Endothelial cell of umbilical vein (primary cell): ENCODE measurements at regions of chr4 and their contacts with region 1.

Region 1: GRCh38 chr4:138035781-138036258 is 206.3 kb downstream of the SLC7A11 start:
- DNase-seq: peak; percentile 80
- H3K4me3 ChIP-seq: no peak overlapping the region
- H3K27ac ChIP-seq: peak overlapping the region; percentile 76
- H3K4me1 ChIP-seq: peaks cover 35% of the 10 kb centered on the region
- H3K27me3 ChIP-seq: no peaks in the 10 kb centered on the region
- CTCF ChIP-seq: peak; percentile 36 to 68
- POLR2A ChIP-seq: no peak

Region 2: DNA sequence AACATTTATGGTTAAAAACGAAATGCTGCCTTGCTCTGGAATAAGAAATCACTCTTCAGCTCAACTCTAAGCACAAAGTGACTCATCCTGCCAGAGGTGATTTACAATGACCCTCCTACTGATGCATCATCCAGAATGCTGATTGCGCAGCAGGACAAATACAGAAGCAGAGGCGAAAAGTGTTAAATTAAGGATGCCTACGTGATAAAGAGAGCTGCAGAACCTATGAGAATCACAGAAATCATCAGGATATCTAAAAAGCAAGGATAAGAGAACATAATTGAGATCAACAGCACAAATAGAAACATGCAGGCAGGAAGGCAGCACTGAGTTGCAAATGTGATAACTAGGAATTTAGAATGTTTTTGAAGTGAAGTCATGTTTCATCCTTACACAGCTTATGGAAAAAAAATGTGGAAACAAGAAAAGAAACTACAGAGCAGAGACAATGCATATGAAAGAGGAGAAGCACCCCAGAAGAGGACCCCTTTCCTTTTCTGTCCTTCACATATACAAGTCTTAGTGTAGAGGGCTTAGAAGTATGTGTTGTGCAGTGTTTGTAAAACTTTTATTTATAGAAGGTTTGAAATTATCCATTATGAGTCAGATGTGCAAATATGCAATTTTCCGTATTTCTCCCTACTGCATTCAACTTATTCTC is 18.0 kb after region 1 on chr4:
- CTCF ChIA-PET with region 1: interaction called, 28 read pairs
- POLR2A ChIA-PET with region 1: interaction called, 3 read pairs
- dilution Hi-C with region 1: no loop called
- intact Hi-C with region 1: no loop called
- DNase-seq: peak; percentile 93
- H3K4me3 ChIP-seq: peak overlapping the region in 1 of 3 experiments; percentile 6
- H3K27ac ChIP-seq: peak overlapping the region; percentile 92
- H3K4me1 ChIP-seq: peaks cover 63% of the 10 kb centered on the region
- H3K27me3 ChIP-seq: no peaks in the 10 kb centered on the region
- CTCF ChIP-seq: no peak
- POLR2A ChIP-seq: peak; percentile 64

Region 3: GRCh38 chr4:138095378-138095777 is 59.6 kb after region 1 on chr4:
- CTCF ChIA-PET with region 1: interaction called, 309 read pairs
- POLR2A ChIA-PET with region 1: interaction called, 4 read pairs
- dilution Hi-C with region 1: no loop called
- intact Hi-C with region 1: loop called (anchors 1 kb)
- DNase-seq: no peak
- H3K4me3 ChIP-seq: no peak overlapping the region
- H3K27ac ChIP-seq: no peak overlapping the region
- H3K4me1 ChIP-seq: peaks cover under 1% of the 10 kb centered on the region
- H3K27me3 ChIP-seq: no peaks in the 10 kb centered on the region
- CTCF ChIP-seq: no peak
- POLR2A ChIP-seq: no peak

Region 4: GRCh38 chr4:138494931-138495330 is 459.1 kb after region 1 on chr4:
- CTCF ChIA-PET with region 1: interaction called, 7 read pairs
- POLR2A ChIA-PET with region 1: no interaction called
- dilution Hi-C with region 1: no loop called
- intact Hi-C with region 1: loop called (anchors 1 kb)
- DNase-seq: peak; percentile 55
- H3K4me3 ChIP-seq: no peak overlapping the region
- H3K27ac ChIP-seq: no peak overlapping the region
- H3K4me1 ChIP-seq: no peaks in the 10 kb centered on the region
- H3K27me3 ChIP-seq: no peaks in the 10 kb centered on the region
- CTCF ChIP-seq: peak; percentile 38 to 39
- POLR2A ChIP-seq: no peak

Region 5: GRCh38 chr4:138576684-138577083 is 540.9 kb after region 1 on chr4:
- CTCF ChIA-PET with region 1: interaction called, 29 read pairs
- POLR2A ChIA-PET with region 1: no interaction called
- dilution Hi-C with region 1: no loop called
- intact Hi-C with region 1: loop called (anchors 1 kb)
- DNase-seq: peak; percentile 57
- H3K4me3 ChIP-seq: no peak overlapping the region
- H3K27ac ChIP-seq: no peak overlapping the region
- H3K4me1 ChIP-seq: no peaks in the 10 kb centered on the region
- H3K27me3 ChIP-seq: peaks cover under 1 to 3% of the 10 kb centered on the region in 2 experiments
- CTCF ChIP-seq: peak; percentile 31 to 53
- POLR2A ChIP-seq: no peak

Region 6: DNA sequence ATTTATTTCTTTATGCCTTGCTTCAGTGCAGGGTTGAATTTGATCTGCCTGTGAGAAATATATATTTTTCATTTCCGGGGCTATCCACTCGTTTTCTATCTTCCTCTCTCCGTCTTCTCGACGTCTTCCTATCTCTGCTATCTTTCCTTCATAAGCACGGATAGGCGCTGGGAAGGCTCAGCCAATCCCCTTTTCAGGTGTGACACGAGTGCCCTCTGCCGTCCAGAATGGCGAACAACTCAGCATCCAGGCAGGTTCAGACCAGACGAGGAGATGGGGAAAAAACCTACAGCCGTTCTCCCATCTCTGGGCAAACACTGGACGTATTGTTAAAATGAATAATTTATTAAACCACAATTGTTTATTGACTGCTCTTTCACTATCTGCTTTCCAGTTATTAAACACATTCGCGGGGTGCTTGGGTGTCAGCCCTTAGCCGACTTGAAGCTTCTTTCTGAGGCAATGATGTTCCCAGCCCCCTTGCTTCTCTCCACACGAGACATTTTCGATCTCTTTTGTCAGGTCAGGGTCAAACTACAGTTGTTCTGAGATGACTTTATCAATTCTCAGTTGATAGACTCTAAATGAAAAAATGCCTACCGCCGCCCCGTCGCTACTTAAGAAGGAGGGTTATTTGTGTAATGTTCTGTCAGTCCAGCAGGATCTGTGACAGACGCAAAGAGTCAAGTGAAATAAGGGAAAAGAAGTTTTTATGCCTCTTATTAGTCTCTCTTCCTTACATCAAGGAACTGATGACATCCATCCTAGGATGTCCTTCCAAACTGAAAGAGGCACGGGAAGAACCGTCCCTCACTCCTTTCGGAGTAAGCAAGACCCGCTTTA is 883.5 kb after region 1 on chr4:
- CTCF ChIA-PET with region 1: no interaction called
- POLR2A ChIA-PET with region 1: no interaction called
- dilution Hi-C with region 1: no loop called
- intact Hi-C with region 1: loop called (anchors 10 kb)
- DNase-seq: peak; percentile 74
- H3K4me3 ChIP-seq: no peak overlapping the region
- H3K27ac ChIP-seq: no peak overlapping the region
- H3K4me1 ChIP-seq: no peaks in the 10 kb centered on the region
- H3K27me3 ChIP-seq: no peaks in the 10 kb centered on the region
- CTCF ChIP-seq: peak; percentile 72 to 75
- POLR2A ChIP-seq: no peak